ENCODE measurements at regions of chr9 and their contacts with region 1.

Region 1: GRCh38 chr9:21239911-21240310 is at the start of gene IFNA14:
- DNase-seq: no peak
- ATAC-seq: no peak
- H3K4me3 ChIP-seq: no peak within 1 kb of the TSS
- H3K4me3 Mint-ChIP-seq: no peak within 1 kb of the TSS
- H3K27ac ChIP-seq: no peak within 1 kb of the TSS
- H3K27ac Mint-ChIP-seq: no peak within 1 kb of the TSS
- H3K4me1 ChIP-seq: no peaks in the 10 kb centered on the region
- H3K4me1 Mint-ChIP-seq: peaks cover 20% of the 10 kb centered on the region
- H3K27me3 ChIP-seq: peaks cover 0 to 5% of the 10 kb centered on the region in 2 experiments
- H3K27me3 Mint-ChIP-seq: peaks cover 8% of the 10 kb centered on the region
- CTCF ChIP-seq: no peak
- total RNA-seq, gene IFNA14: not detected

Region 2: GRCh38 chr9:21171351-21171750 is 68.6 kb before region 1 on chr9:
- CTCF ChIA-PET with region 1: no interaction called
- POLR2A ChIA-PET with region 1: no interaction called
- intact Hi-C with region 1: loop called in 1 of 2 experiments (anchors 2 kb)
- DNase-seq: no peak
- ATAC-seq: no peak
- H3K4me3 ChIP-seq: no peak overlapping the region
- H3K4me3 Mint-ChIP-seq: no peak overlapping the region
- H3K27ac ChIP-seq: no peak overlapping the region
- H3K27ac Mint-ChIP-seq: no peak overlapping the region
- H3K4me1 ChIP-seq: no peaks in the 10 kb centered on the region
- H3K4me1 Mint-ChIP-seq: no peaks in the 10 kb centered on the region
- H3K27me3 ChIP-seq: no peaks in the 10 kb centered on the region
- H3K27me3 Mint-ChIP-seq: peaks cover 6% of the 10 kb centered on the region
- CTCF ChIP-seq: no peak

Region 3: GRCh38 chr9:21267485-21268346 is 27.8 kb after region 1 on chr9:
- CTCF ChIA-PET with region 1: no interaction called
- POLR2A ChIA-PET with region 1: no interaction called
- intact Hi-C with region 1: no loop called
- DNase-seq: no peak
- ATAC-seq: no peak
- H3K4me3 ChIP-seq: no peak overlapping the region
- H3K4me3 Mint-ChIP-seq: no peak overlapping the region
- H3K27ac ChIP-seq: no peak overlapping the region
- H3K27ac Mint-ChIP-seq: no peak overlapping the region
- H3K4me1 ChIP-seq: no peaks in the 10 kb centered on the region
- H3K4me1 Mint-ChIP-seq: no peaks in the 10 kb centered on the region
- H3K27me3 ChIP-seq: peaks cover 2 to 3% of the 10 kb centered on the region in 2 experiments
- H3K27me3 Mint-ChIP-seq: peaks cover 22% of the 10 kb centered on the region
- CTCF ChIP-seq: no peak

Region 4: DNA sequence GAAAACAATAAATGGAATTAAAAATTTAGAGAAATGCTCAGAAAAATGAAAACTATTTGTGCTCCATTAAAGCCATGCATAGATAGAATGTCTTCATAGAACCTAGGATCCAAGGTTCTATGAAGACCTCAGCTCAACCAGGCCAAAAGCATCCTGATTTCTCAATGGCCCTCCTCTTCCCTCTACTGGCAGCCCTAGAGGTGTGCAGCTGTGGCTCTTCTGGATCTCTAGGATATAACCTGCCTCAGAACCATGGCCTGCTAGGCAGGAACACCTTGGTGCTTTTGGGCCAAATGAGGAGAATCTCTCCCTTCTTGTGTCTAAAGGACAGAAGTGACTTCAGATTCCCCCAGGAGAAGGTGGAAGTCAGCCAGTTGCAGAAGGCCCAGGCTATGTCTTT is 215.4 kb after region 1 on chr9:
- CTCF ChIA-PET with region 1: interaction called, 4 read pairs
- POLR2A ChIA-PET with region 1: no interaction called
- intact Hi-C with region 1: loop called (anchors 5 kb)
- DNase-seq: peak in 6 of 14 experiments; percentile 2 to 69 (median 39)
- ATAC-seq: peak; percentile 89
- H3K4me3 ChIP-seq: no peak overlapping the region
- H3K4me3 Mint-ChIP-seq: no peak overlapping the region
- H3K27ac ChIP-seq: no peak overlapping the region
- H3K27ac Mint-ChIP-seq: no peak overlapping the region
- H3K4me1 ChIP-seq: no peaks in the 10 kb centered on the region
- H3K4me1 Mint-ChIP-seq: no peaks in the 10 kb centered on the region
- H3K27me3 ChIP-seq: no peaks in the 10 kb centered on the region
- H3K27me3 Mint-ChIP-seq: peaks cover 24% of the 10 kb centered on the region
- CTCF ChIP-seq: peak; percentile 56

Measured in CD4-positive, alpha-beta T cell (primary cell).